ENCODE measurements at regions of chr3 and their contacts with region 1.

Region 1: GRCh38 chr3:15377961-15378791 is 45.8 kb upstream of the SH3BP5 start:
- DNase-seq: peak; percentile 98

Region 2: GRCh38 chr3:15268033-15268631 is 110.0 kb before region 1 on chr3:
- intact Hi-C with region 1: loop called (anchors 2 to 5 kb)
- DNase-seq: peak; percentile 96

Region 3: GRCh38 chr3:15319575-15319974 is 58.6 kb before region 1 on chr3:
- intact Hi-C with region 1: no loop called
- DNase-seq: peak; percentile 86

Region 4: DNA sequence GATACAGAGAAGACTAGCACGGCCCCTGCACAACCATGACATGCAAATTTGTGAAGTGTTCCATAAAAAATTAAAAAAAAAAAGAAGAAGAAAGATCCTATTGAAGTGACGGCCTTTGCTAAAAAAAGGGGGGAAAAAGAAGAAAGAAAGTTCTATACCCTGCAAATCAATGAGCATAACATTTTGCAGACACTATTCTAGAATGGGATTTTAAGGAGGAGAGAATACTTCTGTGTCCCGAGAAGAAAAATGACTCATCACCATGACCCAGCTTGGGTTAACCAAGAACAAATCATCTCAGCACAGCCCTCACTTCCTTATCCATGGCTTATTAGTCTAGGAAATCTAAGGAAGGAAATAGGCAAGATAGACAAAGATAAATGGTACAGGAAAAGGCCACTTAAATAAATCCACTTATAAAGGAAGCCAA is 38.4 kb before region 1 on chr3:
- intact Hi-C with region 1: loop called in 1 of 2 experiments (anchors 5 kb)
- DNase-seq: no peak

Region 5: GRCh38 chr3:15820911-15821310 is 442.7 kb after region 1 on chr3:
- intact Hi-C with region 1: no loop called
- DNase-seq: no peak